ENCODE measurements at regions of chr10 and their contacts with region 1.

Region 1: GRCh38 chr10:34231441-34232180 is 583.5 kb downstream of the PARD3 start:
- DNase-seq: no peak

Region 2: GRCh38 chr10:32516567-32517495 is 1714.8 kb before region 1 on chr10:
- intact Hi-C with region 1: loop called in 1 of 2 experiments (anchors 5 kb)
- DNase-seq: no peak

Region 3: GRCh38 chr10:33306701-33307512 is 924.7 kb before region 1 on chr10:
- intact Hi-C with region 1: no loop called
- DNase-seq: no peak

Region 4: DNA sequence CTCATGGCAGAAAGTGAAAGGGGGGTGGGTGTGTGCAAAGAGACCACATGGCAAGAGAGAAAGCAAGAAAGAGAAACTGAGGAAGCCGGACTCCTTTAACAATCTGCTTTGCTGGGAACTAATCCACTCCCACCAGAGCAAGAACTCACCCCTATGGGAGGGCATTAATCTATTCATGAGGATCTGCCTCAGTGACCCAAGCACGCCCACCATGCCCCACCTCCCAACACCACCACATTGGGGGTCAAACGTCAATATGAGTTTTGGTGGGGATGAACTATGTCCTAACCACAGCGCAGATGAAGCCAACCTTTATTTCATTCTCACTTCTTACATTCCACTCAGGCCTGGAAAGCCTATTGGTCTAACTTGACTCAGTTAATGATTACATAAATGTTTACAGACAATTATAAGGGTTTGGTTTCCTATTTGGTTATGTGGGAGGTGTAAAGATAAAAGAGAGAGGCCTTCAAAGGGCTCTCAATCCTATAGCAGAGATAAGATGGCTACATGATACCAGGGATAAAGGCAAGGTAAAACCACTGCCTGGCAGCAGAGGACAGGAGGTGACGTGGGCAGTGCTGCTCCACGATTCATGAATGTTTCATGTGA is 18.3 kb before region 1 on chr10:
- intact Hi-C with region 1: loop called in 1 of 2 experiments (anchors 1 kb)
- DNase-seq: no peak

Measured in posterior vena cava (tissue), 2 donors.